ENCODE measurements at regions of chr18 and their contacts with region 1.

Region 1: DNA sequence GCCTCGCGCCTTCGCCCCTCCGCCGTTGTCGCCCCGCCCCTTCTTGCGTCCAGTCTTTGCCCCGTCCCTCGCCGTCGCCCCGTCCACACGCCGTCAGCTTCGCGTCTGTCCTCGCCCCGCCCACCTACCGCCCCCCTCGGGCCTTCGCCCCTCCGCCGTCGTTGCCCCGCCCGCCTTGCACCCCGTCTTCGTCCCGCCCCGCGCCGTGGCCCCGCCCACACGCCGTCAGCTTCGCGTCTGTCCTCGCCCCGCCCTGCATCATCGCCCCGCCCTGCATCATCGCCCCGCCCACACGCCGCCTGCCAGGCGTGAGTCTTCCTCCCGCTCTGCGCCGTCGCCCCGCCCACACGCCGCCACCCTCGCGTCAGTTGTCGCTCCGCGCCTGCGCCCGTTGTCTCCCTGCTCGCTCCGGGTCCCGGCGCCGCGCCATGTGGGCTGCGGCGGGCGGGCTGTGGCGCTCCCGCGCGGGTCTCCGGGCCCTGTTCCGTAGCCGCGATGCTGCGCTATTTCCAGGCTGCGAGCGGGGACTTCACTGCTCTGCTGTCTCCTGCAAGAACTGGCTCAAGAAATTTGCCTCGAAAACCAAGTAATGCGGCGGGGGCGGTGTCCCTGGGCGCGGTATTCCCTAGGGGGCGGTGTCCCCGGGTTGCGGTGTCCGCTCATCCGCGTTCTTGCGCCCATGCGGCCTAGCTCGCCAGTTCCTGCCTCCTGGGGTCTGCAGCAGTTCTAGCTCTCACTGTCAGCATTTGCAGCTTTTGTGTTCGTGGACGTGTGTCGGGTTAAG is at the start of gene RBFA:
- DNase-seq: peak; percentile 90 to 99
- H3K4me3 ChIP-seq: peak within 1 kb of the TSS; percentile 83 to 88
- H3K27ac ChIP-seq: peak within 1 kb of the TSS; percentile 80 to 90
- H3K4me1 ChIP-seq: peaks cover 0 to 5% of the 10 kb centered on the region in 2 donors
- H3K27me3 ChIP-seq: no peaks in the 10 kb centered on the region
- CTCF ChIP-seq: peak; percentile 14 to 26 (median 17)
- total RNA-seq, gene RBFA: 23.1 TPM

Region 2: DNA sequence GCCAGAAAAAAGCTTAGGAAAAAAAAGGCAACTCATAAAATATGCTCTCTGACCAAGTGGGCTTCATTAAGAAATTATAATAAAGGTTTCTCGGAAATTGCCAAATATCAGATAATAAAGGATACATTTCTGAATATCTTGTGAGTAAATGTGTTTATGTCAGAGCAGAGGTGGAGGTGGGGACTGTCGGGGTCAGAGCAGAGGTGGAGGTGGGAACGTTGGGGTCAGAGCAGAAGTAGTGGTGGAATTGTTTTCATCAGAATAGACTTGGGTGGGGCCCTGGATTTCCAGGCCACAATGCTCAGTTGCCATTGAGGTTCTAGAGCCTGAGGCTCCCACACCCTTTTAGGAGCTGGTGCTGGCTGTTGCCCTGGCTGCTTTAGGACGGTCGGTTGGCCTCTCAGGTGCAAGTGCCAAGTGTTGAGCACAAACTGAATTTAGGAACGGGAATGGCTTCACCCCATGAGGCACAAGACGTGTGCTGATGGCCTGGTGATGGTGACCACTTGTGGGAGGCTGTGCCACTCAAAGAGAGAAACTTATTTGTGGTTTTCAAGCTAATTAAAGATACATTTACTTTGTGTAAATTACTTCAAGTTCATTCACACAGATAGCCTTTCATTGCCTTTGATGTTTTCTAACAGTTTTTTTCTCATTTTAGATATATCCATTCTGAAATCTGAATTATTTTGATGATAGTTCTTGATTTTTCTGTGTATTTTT is 833.6 kb before region 1 on chr18:
- intact Hi-C with region 1: no loop called
- DNase-seq: no peak
- H3K4me3 ChIP-seq: no peak overlapping the region
- H3K27ac ChIP-seq: no peak overlapping the region
- H3K4me1 ChIP-seq: no peaks in the 10 kb centered on the region
- H3K27me3 ChIP-seq: no peaks in the 10 kb centered on the region
- CTCF ChIP-seq: no peak

Region 3: GRCh38 chr18:79393635-79394533 is 640.4 kb before region 1 on chr18:
- intact Hi-C with region 1: loop called (anchors 10 kb)
- DNase-seq: peak; percentile 63 to 94
- H3K4me3 ChIP-seq: peak overlapping the region; percentile 77 to 92
- H3K27ac ChIP-seq: peak overlapping the region; percentile 98 to 99
- H3K4me1 ChIP-seq: peaks cover 5 to 17% of the 10 kb centered on the region in 2 donors
- H3K27me3 ChIP-seq: no peaks in the 10 kb centered on the region
- CTCF ChIP-seq: no peak

Region 4: GRCh38 chr18:79951578-79952455 is 82.4 kb before region 1 on chr18 and contains the start of gene SLC66A2:
- intact Hi-C with region 1: loop called (anchors 1 kb)
- DNase-seq: peak; percentile 68 to 95
- H3K4me3 ChIP-seq: peak within 1 kb of the TSS; percentile 98 to 100
- H3K27ac ChIP-seq: peak within 1 kb of the TSS; percentile 68 to 75
- H3K4me1 ChIP-seq: peaks cover 11 to 20% of the 10 kb centered on the region in 2 donors
- H3K27me3 ChIP-seq: no peaks in the 10 kb centered on the region
- CTCF ChIP-seq: peak in 1 of 3 experiments; percentile 4
- total RNA-seq, gene SLC66A2: 52.9 TPM

Region 5: GRCh38 chr18:80009661-80010550 is 24.4 kb before region 1 on chr18:
- intact Hi-C with region 1: loop called (anchors 1 kb)
- DNase-seq: peak; percentile 58 to 89
- H3K4me3 ChIP-seq: peak overlapping the region in 1 of 2 donors; percentile 0
- H3K27ac ChIP-seq: peak overlapping the region; percentile 34 to 66
- H3K4me1 ChIP-seq: no peaks in the 10 kb centered on the region
- H3K27me3 ChIP-seq: no peaks in the 10 kb centered on the region
- CTCF ChIP-seq: no peak

Region 6: GRCh38 chr18:80108728-80109675 is 74.7 kb after region 1 on chr18 and contains the start of gene ADNP2:
- intact Hi-C with region 1: loop called (anchors 1 kb)
- DNase-seq: peak; percentile 81 to 96
- H3K4me3 ChIP-seq: peak within 1 kb of the TSS; percentile 76 to 85
- H3K27ac ChIP-seq: peak within 1 kb of the TSS; percentile 99
- H3K4me1 ChIP-seq: peaks cover 0 to 11% of the 10 kb centered on the region in 2 donors
- H3K27me3 ChIP-seq: no peaks in the 10 kb centered on the region
- CTCF ChIP-seq: no peak
- total RNA-seq, gene ADNP2: 6.8 TPM

Measured in ascending aorta (tissue), 2 donors.